WTC11 (cell line): ENCODE measurements at regions of chr1 and their contacts with region 1.

Region 1: DNA sequence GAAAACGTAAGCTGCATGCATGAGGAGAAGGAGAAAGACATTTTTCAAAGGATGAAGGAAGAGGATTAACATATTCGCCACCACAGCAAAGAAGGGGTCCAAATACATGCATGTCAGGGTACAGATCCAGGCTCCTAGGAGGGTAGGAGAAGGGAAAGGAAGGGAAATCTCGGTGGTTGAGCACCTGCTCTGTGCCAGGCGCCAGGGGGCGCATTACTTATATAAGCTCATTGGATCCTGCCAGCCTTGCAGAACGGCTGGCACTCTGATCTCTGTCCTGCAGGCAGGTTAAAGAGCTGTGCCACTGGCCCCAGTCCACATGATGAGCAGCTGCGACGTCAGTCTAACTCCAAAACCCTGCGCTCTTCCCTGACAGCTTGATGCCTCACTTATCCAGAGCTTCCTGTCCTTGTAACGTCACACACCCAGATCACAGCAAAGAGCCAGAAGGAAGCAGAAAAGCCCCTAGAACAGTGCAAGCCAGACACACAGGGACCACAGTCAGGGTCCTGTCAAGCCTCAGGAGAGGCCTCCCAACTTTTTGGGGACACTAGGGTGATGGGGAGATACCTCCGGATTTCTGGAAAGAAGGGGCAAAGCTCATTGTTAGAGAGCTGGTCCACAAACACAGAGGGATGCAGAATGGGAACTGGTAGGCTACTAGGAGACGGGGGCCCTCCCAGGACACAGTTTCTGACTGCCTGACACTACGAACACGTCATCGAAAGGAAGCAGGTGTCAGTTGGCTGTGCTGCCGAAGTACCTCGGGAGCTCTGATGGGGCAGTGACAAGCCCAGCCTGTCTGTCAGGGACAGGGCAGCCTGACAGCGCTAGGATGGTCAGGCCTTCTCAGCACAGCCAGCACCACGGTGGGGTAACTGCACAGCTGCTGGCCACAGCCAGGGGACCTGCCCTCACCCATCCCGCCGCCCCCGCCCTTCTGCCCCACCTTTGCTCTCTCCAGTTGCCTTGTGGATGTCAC is 99.1 kb downstream of the BEND5 start:
- DNase-seq: peak; percentile 74
- ATAC-seq: peak; percentile 82
- H3K4me3 Mint-ChIP-seq: no peak overlapping the region
- H3K27ac Mint-ChIP-seq: no peak overlapping the region
- H3K4me1 Mint-ChIP-seq: peaks cover 34% of the 10 kb centered on the region
- H3K27me3 Mint-ChIP-seq: no peaks in the 10 kb centered on the region
- CTCF ChIP-seq: peak; percentile 66

Region 2: DNA sequence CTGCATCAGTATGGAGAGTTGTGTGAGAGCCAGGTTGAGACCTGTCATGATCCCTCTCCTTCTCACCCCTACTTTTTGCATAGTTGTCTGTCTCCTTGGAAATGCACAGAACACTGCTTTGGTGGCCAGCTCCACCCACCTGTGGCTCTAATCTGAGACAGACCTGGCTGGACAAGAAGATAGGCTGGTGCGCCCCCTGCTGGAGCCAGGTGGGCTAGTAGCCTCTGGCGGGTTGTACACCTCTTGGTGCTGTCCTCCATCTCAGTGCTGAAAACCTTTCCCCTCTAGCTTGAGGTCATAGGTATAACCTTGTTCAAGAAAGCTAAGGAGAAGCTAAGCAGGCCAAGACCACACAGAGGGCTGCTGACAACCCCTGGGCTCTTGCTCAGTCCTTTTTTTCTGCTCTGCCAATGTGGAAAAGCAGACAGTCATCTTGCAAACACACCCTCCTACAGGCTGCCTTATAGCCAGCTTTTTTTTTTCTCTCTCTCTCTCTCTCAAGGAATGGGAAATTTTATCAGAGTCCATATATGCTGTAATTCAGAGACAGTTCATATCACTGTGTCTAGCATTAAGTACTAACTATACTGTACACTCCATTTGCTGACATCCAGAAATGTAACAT is 146.8 kb before region 1 on chr1:
- CTCF ChIA-PET with region 1: interaction called, 11 read pairs
- POLR2A ChIA-PET with region 1: no interaction called
- DNase-seq: peak; percentile 98
- ATAC-seq: peak; percentile 92
- H3K4me3 Mint-ChIP-seq: no peak overlapping the region
- H3K27ac Mint-ChIP-seq: no peak overlapping the region
- H3K4me1 Mint-ChIP-seq: peaks cover 38% of the 10 kb centered on the region
- H3K27me3 Mint-ChIP-seq: no peaks in the 10 kb centered on the region
- CTCF ChIP-seq: peak; percentile 88

Region 3: GRCh38 chr1:48581270-48581669 is 96.3 kb before region 1 on chr1:
- CTCF ChIA-PET with region 1: interaction called, 13 read pairs
- POLR2A ChIA-PET with region 1: no interaction called
- DNase-seq: no peak
- ATAC-seq: no peak
- H3K4me3 Mint-ChIP-seq: no peak overlapping the region
- H3K27ac Mint-ChIP-seq: no peak overlapping the region
- H3K4me1 Mint-ChIP-seq: no peaks in the 10 kb centered on the region
- H3K27me3 Mint-ChIP-seq: no peaks in the 10 kb centered on the region
- CTCF ChIP-seq: no peak

Region 4: DNA sequence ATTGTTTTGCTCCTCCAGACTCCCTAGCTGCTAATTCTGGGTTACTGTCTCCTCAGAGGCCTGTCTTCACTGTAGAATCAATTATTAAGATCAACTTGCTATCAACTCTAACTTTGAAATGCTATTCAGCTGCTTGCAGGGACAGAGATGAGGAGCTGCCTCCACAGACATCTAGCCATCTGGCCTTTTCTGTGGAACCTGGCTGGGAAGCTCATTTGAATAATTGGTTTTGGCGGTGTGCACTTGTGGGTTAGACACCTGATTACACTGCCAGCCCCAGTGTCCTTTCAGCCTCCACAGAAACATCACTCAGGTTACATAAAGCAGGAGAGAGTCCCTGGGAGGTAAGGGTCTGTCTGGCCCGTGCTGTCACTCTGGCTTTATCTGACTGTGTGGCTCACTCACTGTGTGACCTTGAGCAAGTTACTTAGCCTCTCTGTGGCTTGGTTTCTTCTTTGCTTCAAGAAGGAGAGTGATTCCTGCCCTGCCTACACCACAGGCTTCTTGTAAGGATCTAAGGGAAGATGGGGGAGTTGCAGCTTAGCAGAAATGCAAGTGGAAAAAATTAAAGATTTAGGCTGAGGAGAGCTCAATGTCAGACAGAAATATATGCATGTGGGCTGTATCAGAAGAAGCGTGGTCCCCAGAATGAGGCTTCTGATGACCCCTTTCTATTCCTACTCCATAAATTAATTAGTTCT is 32.5 kb before region 1 on chr1:
- CTCF ChIA-PET with region 1: interaction called, 20 read pairs
- POLR2A ChIA-PET with region 1: no interaction called
- DNase-seq: no peak
- ATAC-seq: 0 out of 2 replicates have a peak, but pooled peaks have one; percentile 9
- H3K4me3 Mint-ChIP-seq: no peak overlapping the region
- H3K27ac Mint-ChIP-seq: no peak overlapping the region
- H3K4me1 Mint-ChIP-seq: peaks cover 25% of the 10 kb centered on the region
- H3K27me3 Mint-ChIP-seq: peaks cover 11% of the 10 kb centered on the region
- CTCF ChIP-seq: no peak

Region 5: GRCh38 chr1:48688102-48688760 is 10.6 kb after region 1 on chr1:
- CTCF ChIA-PET with region 1: interaction called, 34 read pairs
- POLR2A ChIA-PET with region 1: no interaction called
- DNase-seq: no peak
- ATAC-seq: peak; percentile 92
- H3K4me3 Mint-ChIP-seq: no peak overlapping the region
- H3K27ac Mint-ChIP-seq: no peak overlapping the region
- H3K4me1 Mint-ChIP-seq: peaks cover 15% of the 10 kb centered on the region
- H3K27me3 Mint-ChIP-seq: no peaks in the 10 kb centered on the region; the same call in 1 of the 2 replicates
- CTCF ChIP-seq: peak; percentile 51; the same call in 1 of the 2 replicates

Region 6: DNA sequence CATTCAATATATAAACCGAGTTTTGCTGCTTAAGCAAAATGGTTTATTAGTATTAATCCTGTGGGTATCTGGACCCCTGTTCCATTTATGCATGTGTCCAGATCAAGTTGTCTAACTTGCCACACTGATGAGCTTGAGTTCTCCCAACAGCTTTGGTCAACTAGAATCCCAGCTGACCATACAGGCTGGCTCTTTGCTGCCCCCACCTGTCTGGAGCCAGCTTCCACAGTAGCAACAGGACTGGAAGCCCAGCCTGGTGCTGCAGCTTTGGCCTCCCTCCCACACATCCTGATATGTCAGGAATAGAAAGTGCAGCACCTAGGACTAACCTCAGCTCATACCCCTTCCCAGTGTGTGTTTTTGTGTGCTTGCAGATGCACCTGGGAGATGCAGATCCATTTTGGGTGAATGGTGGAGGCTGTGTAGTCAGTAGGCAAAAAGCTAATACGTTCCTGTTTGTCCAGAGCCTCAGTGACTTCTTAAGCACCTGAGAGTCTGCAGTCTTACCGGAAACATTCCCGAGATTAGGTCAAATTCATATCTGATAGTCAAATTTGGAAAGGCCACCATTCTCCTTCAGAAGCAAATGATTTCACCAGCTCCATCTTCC is 140.0 kb after region 1 on chr1:
- CTCF ChIA-PET with region 1: interaction called, 47 read pairs
- POLR2A ChIA-PET with region 1: interaction called, 3 read pairs
- DNase-seq: peak; percentile 75
- ATAC-seq: peak; percentile 100
- H3K4me3 Mint-ChIP-seq: no peak overlapping the region
- H3K27ac Mint-ChIP-seq: no peak overlapping the region
- H3K4me1 Mint-ChIP-seq: no peaks in the 10 kb centered on the region
- H3K27me3 Mint-ChIP-seq: no peaks in the 10 kb centered on the region
- CTCF ChIP-seq: peak; percentile 47

Region 7: DNA sequence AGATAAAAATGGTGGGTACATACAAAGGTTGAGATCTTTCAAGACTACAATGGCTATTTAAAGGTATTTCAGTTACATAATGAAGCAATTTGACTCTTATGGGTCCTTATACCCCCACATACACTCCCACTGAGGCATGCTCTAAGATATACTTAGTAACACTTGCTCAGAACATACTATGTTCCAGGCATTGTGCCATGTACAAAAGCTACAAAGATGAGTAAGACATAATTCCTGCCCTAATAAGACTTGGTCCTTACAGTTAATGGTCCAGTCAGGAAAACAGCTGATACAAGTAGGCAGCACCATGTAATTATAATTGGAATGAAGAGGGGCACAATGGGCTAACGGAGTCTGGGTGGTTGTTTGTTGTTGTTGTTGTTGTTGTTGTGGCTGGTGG is 265.8 kb after region 1 on chr1:
- CTCF ChIA-PET with region 1: no interaction called
- POLR2A ChIA-PET with region 1: no interaction called
- DNase-seq: no peak
- ATAC-seq: no peak
- H3K4me3 Mint-ChIP-seq: no peak overlapping the region
- H3K27ac Mint-ChIP-seq: no peak overlapping the region
- H3K4me1 Mint-ChIP-seq: peaks cover 3% of the 10 kb centered on the region
- H3K27me3 Mint-ChIP-seq: no peaks in the 10 kb centered on the region
- CTCF ChIP-seq: no peak